ENCODE measurements at regions of chr1 and their contacts with region 1.

Region 1: GRCh38 chr1:93692983-93693591 is 11.4 kb upstream of the BCAR3 start:
- DNase-seq: peak; percentile 86
- H3K4me3 Mint-ChIP-seq: no peak overlapping the region
- H3K27ac Mint-ChIP-seq: no peak overlapping the region
- H3K4me1 Mint-ChIP-seq: no peaks in the 10 kb centered on the region
- H3K27me3 Mint-ChIP-seq: no peaks in the 10 kb centered on the region
- CTCF ChIP-seq: no peak

Region 2: GRCh38 chr1:93672069-93672468 is 21.0 kb before region 1 on chr1:
- CTCF ChIA-PET with region 1: no interaction called
- POLR2A ChIA-PET with region 1: interaction called, 24 read pairs
- intact Hi-C with region 1: no loop called
- DNase-seq: peak; percentile 89
- H3K4me3 Mint-ChIP-seq: no peak overlapping the region
- H3K27ac Mint-ChIP-seq: peak overlapping the region; percentile 42
- H3K4me1 Mint-ChIP-seq: peaks cover 63% of the 10 kb centered on the region
- H3K27me3 Mint-ChIP-seq: no peaks in the 10 kb centered on the region
- CTCF ChIP-seq: no peak

Region 3: GRCh38 chr1:93734999-93735398 is 41.9 kb after region 1 on chr1:
- CTCF ChIA-PET with region 1: interaction called, 3 read pairs
- POLR2A ChIA-PET with region 1: interaction called, 8 read pairs
- intact Hi-C with region 1: loop called (anchors 5 kb)
- DNase-seq: no peak
- H3K4me3 Mint-ChIP-seq: no peak overlapping the region
- H3K27ac Mint-ChIP-seq: no peak overlapping the region
- H3K4me1 Mint-ChIP-seq: peaks cover 62% of the 10 kb centered on the region
- H3K27me3 Mint-ChIP-seq: no peaks in the 10 kb centered on the region
- CTCF ChIP-seq: peak; percentile 7

Region 4: DNA sequence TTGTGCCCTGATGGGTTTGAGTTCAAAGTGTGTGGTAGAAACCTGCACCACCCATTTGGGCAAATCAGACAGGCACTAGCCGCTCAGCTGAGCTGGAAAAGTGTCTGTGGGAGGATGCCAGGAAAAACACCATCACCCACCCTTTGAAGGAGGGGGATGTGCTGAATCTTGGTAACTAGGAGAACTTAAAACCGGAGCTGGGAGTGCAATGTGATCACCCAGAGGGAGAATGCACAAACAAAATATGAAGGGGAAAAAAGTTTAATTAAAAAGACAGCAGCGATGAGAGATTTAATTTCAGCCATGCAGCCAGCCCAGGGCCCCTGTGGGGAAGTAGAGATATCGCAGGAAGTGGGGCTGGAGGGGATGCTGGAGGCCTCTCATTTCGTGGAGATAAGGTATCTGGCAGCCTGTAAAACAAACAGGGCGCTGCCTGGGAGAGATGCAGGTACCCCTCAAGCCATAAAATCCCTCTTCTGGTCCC is 75.3 kb after region 1 on chr1:
- CTCF ChIA-PET with region 1: no interaction called
- POLR2A ChIA-PET with region 1: interaction called, 40 read pairs
- intact Hi-C with region 1: no loop called
- DNase-seq: no peak
- H3K4me3 Mint-ChIP-seq: peak overlapping the region; percentile 25
- H3K27ac Mint-ChIP-seq: peak overlapping the region; percentile 52
- H3K4me1 Mint-ChIP-seq: peaks cover 63% of the 10 kb centered on the region
- H3K27me3 Mint-ChIP-seq: no peaks in the 10 kb centered on the region
- CTCF ChIP-seq: no peak